MCF 10A (cell line): ENCODE measurements at regions of chr2 and their contacts with region 1.

Region 1: DNA sequence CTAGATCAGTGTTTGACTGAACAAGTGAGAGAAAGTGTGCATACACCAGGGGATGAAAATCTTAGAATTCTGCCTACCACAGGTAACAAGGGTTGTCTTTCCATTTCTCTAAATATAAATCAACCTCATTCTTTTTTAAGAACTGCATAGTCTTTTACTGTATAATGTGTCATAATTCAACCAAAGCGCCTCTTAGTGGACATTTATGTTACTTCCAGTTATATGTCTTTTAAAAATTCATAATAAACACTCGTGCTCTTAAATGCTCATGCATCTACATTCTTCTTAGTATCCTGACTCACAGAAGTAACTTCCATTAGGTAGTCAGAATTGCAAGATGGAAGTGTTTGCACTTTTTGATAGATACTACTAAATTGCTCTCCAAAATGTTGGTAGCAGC is 76.2 kb downstream of the CHRNA1 start:
- DNase-seq: peak; percentile 51
- H3K4me3 Mint-ChIP-seq: no peak overlapping the region
- H3K27ac Mint-ChIP-seq: no peak overlapping the region
- H3K4me1 Mint-ChIP-seq: peaks cover 5% of the 10 kb centered on the region
- H3K27me3 Mint-ChIP-seq: peaks cover 16% of the 10 kb centered on the region
- CTCF ChIP-seq: peak; percentile 27

Region 2: GRCh38 chr2:174577967-174578589 is 110.0 kb before region 1 on chr2:
- CTCF ChIA-PET with region 1: interaction called, 9 read pairs
- POLR2A ChIA-PET with region 1: interaction called, 3 read pairs
- intact Hi-C with region 1: loop called (anchors 1 kb)
- DNase-seq: peak; percentile 67
- H3K4me3 Mint-ChIP-seq: no peak overlapping the region
- H3K27ac Mint-ChIP-seq: no peak overlapping the region
- H3K4me1 Mint-ChIP-seq: peaks cover 8% of the 10 kb centered on the region
- H3K27me3 Mint-ChIP-seq: no peaks in the 10 kb centered on the region
- CTCF ChIP-seq: peak; percentile 56

Region 3: GRCh38 chr2:174603280-174603679 is 84.8 kb before region 1 on chr2:
- CTCF ChIA-PET with region 1: interaction called, 49 read pairs
- POLR2A ChIA-PET with region 1: interaction called, 4 read pairs
- intact Hi-C with region 1: loop called (anchors 1 kb)
- DNase-seq: peak; percentile 58
- H3K4me3 Mint-ChIP-seq: no peak overlapping the region
- H3K27ac Mint-ChIP-seq: no peak overlapping the region
- H3K4me1 Mint-ChIP-seq: peaks cover 25% of the 10 kb centered on the region
- H3K27me3 Mint-ChIP-seq: no peaks in the 10 kb centered on the region
- CTCF ChIP-seq: peak; percentile 18

Region 4: GRCh38 chr2:174644401-174644800 is 43.7 kb before region 1 on chr2:
- CTCF ChIA-PET with region 1: no interaction called
- POLR2A ChIA-PET with region 1: no interaction called
- intact Hi-C with region 1: no loop called
- DNase-seq: no peak
- H3K4me3 Mint-ChIP-seq: no peak overlapping the region
- H3K27ac Mint-ChIP-seq: no peak overlapping the region
- H3K4me1 Mint-ChIP-seq: no peaks in the 10 kb centered on the region
- H3K27me3 Mint-ChIP-seq: no peaks in the 10 kb centered on the region
- CTCF ChIP-seq: no peak

Region 5: DNA sequence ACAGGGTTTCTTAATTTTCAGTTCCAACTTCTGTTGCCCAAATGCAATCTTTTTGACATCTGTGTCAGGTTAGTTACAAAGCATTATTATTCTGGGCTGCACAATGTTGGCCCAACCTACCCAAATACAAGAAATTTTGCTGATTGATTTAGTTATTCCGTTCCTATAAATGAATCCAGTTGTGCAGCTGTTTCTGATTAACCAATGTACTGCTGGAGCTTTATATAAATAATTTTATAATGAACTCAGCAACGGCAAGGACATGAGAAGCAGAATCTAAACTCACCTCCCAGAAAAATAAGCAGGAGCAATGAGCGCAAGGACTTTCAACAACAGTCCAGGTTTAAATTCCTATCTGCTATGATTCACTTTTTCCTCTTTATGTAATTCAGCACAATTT is 14.2 kb before region 1 on chr2:
- CTCF ChIA-PET with region 1: interaction called, 11 read pairs
- POLR2A ChIA-PET with region 1: interaction called, 4 read pairs
- intact Hi-C with region 1: no loop called
- DNase-seq: no peak
- H3K4me3 Mint-ChIP-seq: no peak overlapping the region
- H3K27ac Mint-ChIP-seq: no peak overlapping the region
- H3K4me1 Mint-ChIP-seq: peaks cover 6% of the 10 kb centered on the region
- H3K27me3 Mint-ChIP-seq: no peaks in the 10 kb centered on the region
- CTCF ChIP-seq: no peak